CD4-positive, alpha-beta memory T cell (primary cell): ENCODE measurements at regions of chr19 and their contacts with region 1.

Region 1: DNA sequence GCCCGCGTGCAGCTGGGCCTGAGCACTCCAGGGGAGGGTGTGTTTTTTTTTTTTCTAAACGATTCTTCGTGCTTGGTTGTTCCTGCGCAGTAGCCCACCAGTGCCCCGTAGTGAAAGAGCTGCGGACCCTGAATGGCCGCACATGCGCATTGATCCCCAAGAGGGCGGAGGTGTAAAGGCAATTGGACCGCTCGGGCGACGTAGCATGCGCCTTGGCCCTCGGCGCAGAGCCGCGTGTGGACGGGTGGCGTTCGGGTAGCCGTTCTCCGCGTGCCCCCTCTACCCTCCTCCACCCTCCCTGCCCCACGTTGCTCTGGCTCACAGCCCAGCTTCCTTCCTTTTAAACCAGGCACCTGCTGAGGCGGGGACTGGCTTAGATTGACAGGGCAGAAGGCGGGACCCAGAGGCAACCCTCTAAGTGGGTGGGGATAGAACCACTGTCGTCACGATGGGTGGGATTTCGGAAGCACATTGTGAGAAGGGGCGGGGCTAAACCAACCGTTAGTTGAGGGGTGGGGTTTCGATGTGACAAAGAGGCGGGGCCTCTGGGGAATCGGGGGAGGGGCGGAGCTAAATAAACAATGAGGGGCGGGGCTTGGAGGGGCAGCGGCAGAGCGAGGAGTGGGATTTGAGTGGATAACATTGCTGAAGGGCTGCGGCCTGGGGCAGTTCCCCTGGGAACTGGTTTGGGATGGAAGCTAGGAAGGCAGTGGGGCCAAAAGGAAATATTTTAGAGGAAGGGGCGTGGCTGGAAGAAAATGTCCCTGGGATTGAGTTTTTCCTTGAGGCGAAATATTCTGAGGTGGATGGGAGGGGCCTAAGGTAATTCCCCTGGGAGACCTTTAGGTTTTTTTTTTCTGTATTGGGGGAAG is 543 bp upstream of the NUP62 start:
- DNase-seq: peak; percentile 94 to 97 (median 96)
- H3K4me3 ChIP-seq: peak overlapping the region; percentile 93 to 99
- H3K4me3 Mint-ChIP-seq: peak overlapping the region; percentile 97 to 99 (median 98)
- H3K27ac ChIP-seq: peak overlapping the region; percentile 96
- H3K27ac Mint-ChIP-seq: peak overlapping the region; percentile 96 to 99 (median 98)
- H3K4me1 ChIP-seq: peaks cover 57% of the 10 kb centered on the region
- H3K4me1 Mint-ChIP-seq: peaks cover 36 to 74% (median 57%) of the 10 kb centered on the region in 4 donors
- H3K27me3 ChIP-seq: no peaks in the 10 kb centered on the region
- H3K27me3 Mint-ChIP-seq: no peaks in the 10 kb centered on the region

Region 2: DNA sequence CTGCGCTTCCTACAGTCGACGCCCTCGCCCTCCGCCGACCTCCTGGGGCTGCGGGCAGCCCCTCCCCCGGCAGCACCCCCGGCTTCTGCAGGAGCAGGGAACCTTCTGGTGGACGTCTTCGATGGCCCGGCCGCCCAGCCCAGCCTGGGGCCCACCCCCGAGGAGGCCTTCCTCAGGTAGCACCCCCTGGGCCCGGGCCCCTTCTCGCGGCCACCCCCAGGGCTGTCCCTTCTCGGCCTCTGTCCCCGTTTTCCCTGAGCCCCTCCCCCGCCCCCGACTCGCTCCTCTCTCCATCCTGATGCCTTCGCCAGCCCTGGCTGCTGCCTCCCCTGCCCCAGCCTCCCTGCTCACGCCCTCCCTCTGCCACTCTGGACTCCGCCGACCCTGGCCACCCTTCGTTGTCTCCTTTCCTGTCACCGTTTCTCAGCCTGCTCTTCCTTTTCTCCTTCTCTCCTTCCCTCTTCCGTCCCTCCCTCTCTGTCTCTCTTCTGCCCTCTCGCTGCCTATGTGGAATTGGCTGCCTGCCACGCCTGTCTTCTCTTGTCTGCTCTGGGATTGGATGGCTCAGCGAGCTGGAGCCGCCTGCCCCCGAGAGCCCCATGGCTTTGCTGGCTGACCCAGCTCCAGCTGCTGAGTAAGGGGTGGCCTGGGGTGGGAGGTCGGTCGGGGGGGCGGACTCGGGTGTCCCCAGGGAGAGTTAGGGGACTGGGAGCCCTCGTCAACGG is 127.7 kb before region 1 on chr19:
- CTCF ChIA-PET with region 1: no interaction called
- POLR2A ChIA-PET with region 1: no interaction called
- intact Hi-C with region 1: no loop called
- DNase-seq: no peak
- H3K4me3 ChIP-seq: no peak overlapping the region
- H3K4me3 Mint-ChIP-seq: no peak overlapping the region
- H3K27ac ChIP-seq: no peak overlapping the region
- H3K27ac Mint-ChIP-seq: peak overlapping the region in 1 of 7 donors; percentile 57
- H3K4me1 ChIP-seq: no peaks in the 10 kb centered on the region
- H3K4me1 Mint-ChIP-seq: no peaks in the 10 kb centered on the region
- H3K27me3 ChIP-seq: no peaks in the 10 kb centered on the region
- H3K27me3 Mint-ChIP-seq: no peaks in the 10 kb centered on the region

Region 3: GRCh38 chr19:49817964-49818648 is 111.7 kb before region 1 on chr19 and contains the start of gene MED25:
- CTCF ChIA-PET with region 1: no interaction called
- POLR2A ChIA-PET with region 1: interaction called, 10 read pairs
- intact Hi-C with region 1: loop called (anchors 2 kb)
- DNase-seq: peak; percentile 90 to 96 (median 95)
- H3K4me3 ChIP-seq: peak within 1 kb of the TSS; percentile 64 to 88
- H3K4me3 Mint-ChIP-seq: peak within 1 kb of the TSS; percentile 89 to 99 (median 99)
- H3K27ac ChIP-seq: peak within 1 kb of the TSS; percentile 95
- H3K27ac Mint-ChIP-seq: peak within 1 kb of the TSS; percentile 98 to 100 (median 100)
- H3K4me1 ChIP-seq: peaks cover 33% of the 10 kb centered on the region
- H3K4me1 Mint-ChIP-seq: peaks cover 17 to 54% (median 36%) of the 10 kb centered on the region in 4 donors
- H3K27me3 ChIP-seq: no peaks in the 10 kb centered on the region
- H3K27me3 Mint-ChIP-seq: no peaks in the 10 kb centered on the region
- total RNA-seq, gene MED25: 41.8 to 48.8 TPM

Region 4: DNA sequence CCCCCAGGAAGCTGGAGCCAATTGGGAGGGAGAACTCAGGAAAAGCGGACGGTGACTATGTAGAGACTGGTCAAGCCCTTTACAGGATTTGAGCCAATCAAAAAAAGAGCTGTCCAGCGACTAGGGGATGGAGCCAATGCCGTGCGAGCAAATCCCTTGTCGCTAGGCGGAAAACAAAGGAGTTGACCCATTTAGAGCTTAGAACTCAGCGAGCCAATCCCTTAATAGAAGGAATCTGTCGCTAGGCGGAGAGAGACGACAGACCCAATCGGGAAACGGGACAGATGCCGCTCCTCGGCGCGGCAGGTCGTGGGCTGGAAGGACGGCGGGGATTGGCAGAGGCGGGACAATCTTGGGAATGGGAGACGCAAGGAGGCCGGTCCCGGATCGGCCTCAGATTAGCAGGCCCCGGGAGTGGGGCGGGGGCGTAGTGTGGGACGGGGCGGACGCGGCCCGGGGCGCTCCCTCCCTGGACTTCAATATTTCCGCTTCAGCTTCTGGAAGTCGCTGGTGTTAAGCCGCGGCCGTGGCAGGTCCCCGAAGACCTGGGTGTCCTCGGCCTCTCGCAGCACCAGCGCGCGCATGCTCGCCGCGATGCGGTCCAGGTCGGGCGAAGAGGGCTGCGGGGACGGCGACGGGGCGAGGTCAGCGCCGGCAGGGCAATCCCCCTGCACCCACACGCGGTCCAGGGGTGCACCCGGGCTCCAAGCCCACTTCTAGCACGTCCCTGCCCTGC is 60.2 kb before region 1 on chr19:
- CTCF ChIA-PET with region 1: interaction called, 4 read pairs
- POLR2A ChIA-PET with region 1: interaction called, 14 read pairs
- intact Hi-C with region 1: no loop called
- DNase-seq: peak; percentile 92 to 94 (median 92)
- H3K4me3 ChIP-seq: peak overlapping the region; percentile 47 to 70
- H3K4me3 Mint-ChIP-seq: peak overlapping the region in 3 of 8 donors; percentile 78 to 87 (median 81)
- H3K27ac ChIP-seq: peak overlapping the region; percentile 66
- H3K27ac Mint-ChIP-seq: peak overlapping the region in 5 of 7 donors; percentile 88 to 94 (median 92)
- H3K4me1 ChIP-seq: peaks cover 53% of the 10 kb centered on the region
- H3K4me1 Mint-ChIP-seq: peaks cover 17 to 43% (median 22%) of the 10 kb centered on the region in 4 donors
- H3K27me3 ChIP-seq: no peaks in the 10 kb centered on the region
- H3K27me3 Mint-ChIP-seq: no peaks in the 10 kb centered on the region

Region 5: GRCh38 chr19:49896863-49897621 is 32.8 kb before region 1 on chr19 and contains the start of gene IL4I1:
- CTCF ChIA-PET with region 1: no interaction called
- POLR2A ChIA-PET with region 1: interaction called, 28 read pairs
- intact Hi-C with region 1: loop called (anchors 2 kb)
- DNase-seq: peak; percentile 76 to 94 (median 87)
- H3K4me3 ChIP-seq: peak within 1 kb of the TSS; percentile 1 to 44
- H3K4me3 Mint-ChIP-seq: peak within 1 kb of the TSS; percentile 85 to 92 (median 90)
- H3K27ac ChIP-seq: peak within 1 kb of the TSS; percentile 98
- H3K27ac Mint-ChIP-seq: peak within 1 kb of the TSS; percentile 97 to 100 (median 99)
- H3K4me1 ChIP-seq: peaks cover 44% of the 10 kb centered on the region
- H3K4me1 Mint-ChIP-seq: peaks cover 23 to 54% (median 40%) of the 10 kb centered on the region in 4 donors
- H3K27me3 ChIP-seq: no peaks in the 10 kb centered on the region
- H3K27me3 Mint-ChIP-seq: no peaks in the 10 kb centered on the region
- total RNA-seq, gene IL4I1: 2.6 to 3.4 TPM

Region 6: DNA sequence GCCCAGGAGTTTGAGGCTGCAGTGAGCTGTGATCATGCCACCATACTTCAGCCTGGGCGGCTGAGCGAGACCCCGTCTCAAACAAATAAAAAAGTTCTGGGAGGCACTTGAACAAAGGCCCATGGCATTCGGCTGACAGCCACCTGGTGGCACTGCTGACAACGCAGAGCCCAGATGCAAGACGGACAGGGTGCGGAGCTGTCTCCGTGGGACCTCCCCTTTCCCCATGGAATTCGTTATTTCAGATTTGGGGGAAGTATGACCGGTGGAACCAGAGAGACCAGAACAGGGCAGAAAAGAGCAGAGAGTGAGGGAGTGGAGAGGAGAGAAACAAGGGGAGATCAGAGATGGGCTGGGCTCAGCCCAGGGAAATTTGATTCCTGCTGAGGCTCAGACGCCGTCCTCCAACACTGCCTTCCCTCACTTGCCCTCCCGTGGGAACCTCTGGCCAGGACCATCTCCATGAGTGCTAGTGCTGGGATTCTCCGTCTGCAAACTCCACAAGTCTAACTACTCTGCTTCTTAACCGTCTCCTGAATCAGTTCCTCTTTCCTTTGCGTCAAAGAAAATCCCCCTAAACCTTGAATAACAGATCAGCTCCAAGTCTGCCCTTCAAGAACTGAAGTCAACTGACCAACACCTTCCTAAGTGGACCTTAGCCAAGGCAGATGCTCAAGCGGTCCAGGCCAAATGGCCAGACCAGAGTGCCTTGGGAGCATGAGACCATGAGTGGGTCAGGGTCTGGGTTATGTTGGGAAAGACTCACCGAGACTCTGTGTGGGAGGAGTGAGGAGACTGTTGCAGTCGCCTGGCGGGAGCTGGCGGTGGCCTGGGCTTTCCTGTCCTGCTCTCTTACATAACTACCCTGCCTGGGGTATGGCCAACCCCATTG is 12.8 kb before region 1 on chr19:
- CTCF ChIA-PET with region 1: no interaction called
- POLR2A ChIA-PET with region 1: interaction called, 14 read pairs
- intact Hi-C with region 1: no loop called
- DNase-seq: no peak
- H3K4me3 ChIP-seq: no peak overlapping the region
- H3K4me3 Mint-ChIP-seq: no peak overlapping the region
- H3K27ac ChIP-seq: no peak overlapping the region
- H3K27ac Mint-ChIP-seq: peak overlapping the region in 4 of 7 donors; percentile 24 to 76 (median 34)
- H3K4me1 ChIP-seq: peaks cover 6% of the 10 kb centered on the region
- H3K4me1 Mint-ChIP-seq: peaks cover 12 to 65% (median 36%) of the 10 kb centered on the region in 4 donors
- H3K27me3 ChIP-seq: no peaks in the 10 kb centered on the region
- H3K27me3 Mint-ChIP-seq: no peaks in the 10 kb centered on the region

Region 7: GRCh38 chr19:50804420-50805272 is 874.8 kb after region 1 on chr19:
- CTCF ChIA-PET with region 1: no interaction called
- POLR2A ChIA-PET with region 1: no interaction called
- intact Hi-C with region 1: loop called (anchors 2 kb)
- DNase-seq: peak; percentile 98 to 99 (median 98)
- H3K4me3 ChIP-seq: peak overlapping the region; percentile 66 to 70
- H3K4me3 Mint-ChIP-seq: peak overlapping the region; percentile 95 to 100 (median 100)
- H3K27ac ChIP-seq: peak overlapping the region; percentile 93
- H3K27ac Mint-ChIP-seq: peak overlapping the region; percentile 99 to 100 (median 100)
- H3K4me1 ChIP-seq: peaks cover 27% of the 10 kb centered on the region
- H3K4me1 Mint-ChIP-seq: peaks cover 24 to 50% (median 40%) of the 10 kb centered on the region in 4 donors
- H3K27me3 ChIP-seq: no peaks in the 10 kb centered on the region
- H3K27me3 Mint-ChIP-seq: no peaks in the 10 kb centered on the region